Right ventricle myocardium superior (tissue), 1 donor: ENCODE measurements at regions of chr4 and their contacts with region 1.

Region 1: GRCh38 chr4:174764105-174764729 is 64.8 kb downstream of the GLRA3 start:
- DNase-seq: no peak
- ATAC-seq: no peak

Region 2: DNA sequence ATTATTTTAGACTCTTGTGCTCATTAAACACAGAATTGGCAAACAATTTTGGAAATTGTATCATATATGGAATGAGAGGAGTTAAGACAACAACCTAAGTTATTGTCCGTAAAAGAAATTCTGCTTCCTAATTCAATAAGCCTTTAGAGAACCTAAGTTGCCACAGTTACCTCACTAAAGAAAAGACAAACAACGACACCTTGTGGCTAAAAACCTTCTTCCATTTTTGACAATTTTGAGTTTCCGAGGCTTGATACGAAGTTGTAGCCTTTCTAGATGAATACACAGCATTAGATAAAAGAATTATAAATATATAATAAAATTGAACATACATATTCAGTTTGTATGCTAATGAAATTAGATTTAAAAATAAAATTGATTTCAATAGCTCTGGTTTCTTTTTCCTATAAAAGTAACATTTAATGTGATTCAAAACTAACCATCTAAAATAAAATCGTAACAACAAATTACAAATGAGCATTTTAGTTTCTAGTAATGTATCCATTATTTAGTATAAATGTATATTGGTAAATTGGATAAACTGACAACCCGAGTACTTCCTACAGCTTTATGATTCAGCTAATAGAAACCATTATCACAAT is 772.7 kb after region 1 on chr4:
- intact Hi-C with region 1: loop called (anchors 5 kb)
- DNase-seq: no peak
- ATAC-seq: no peak